AG04450 (cell line): ENCODE measurements at regions of chr2 and their contacts with region 1.

Region 1: GRCh38 chr2:173210270-173211196 is 134.9 kb downstream of the MAP3K20 start:
- DNase-seq: peak; percentile 91
- H3K4me3 ChIP-seq: no peak overlapping the region
- H3K27ac ChIP-seq: peak overlapping the region; percentile 54
- H3K27me3 ChIP-seq: no peaks in the 10 kb centered on the region
- CTCF ChIP-seq: peak; percentile 92

Region 2: GRCh38 chr2:173021939-173022371 is 188.6 kb before region 1 on chr2:
- CTCF ChIA-PET with region 1: interaction called, 324 read pairs
- POLR2A ChIA-PET with region 1: no interaction called
- DNase-seq: no peak
- H3K4me3 ChIP-seq: no peak overlapping the region
- H3K27ac ChIP-seq: no peak overlapping the region
- H3K27me3 ChIP-seq: no peaks in the 10 kb centered on the region
- CTCF ChIP-seq: peak; percentile 61

Region 3: GRCh38 chr2:173037245-173038120 is 173.1 kb before region 1 on chr2:
- CTCF ChIA-PET with region 1: interaction called, 17 read pairs
- POLR2A ChIA-PET with region 1: no interaction called
- DNase-seq: no peak
- H3K4me3 ChIP-seq: no peak overlapping the region
- H3K27ac ChIP-seq: no peak overlapping the region
- H3K27me3 ChIP-seq: no peaks in the 10 kb centered on the region
- CTCF ChIP-seq: no peak

Region 4: GRCh38 chr2:173075781-173076580 is 134.6 kb before region 1 on chr2 and contains the start of gene MAP3K20:
- CTCF ChIA-PET with region 1: interaction called, 14 read pairs
- POLR2A ChIA-PET with region 1: interaction called, 6 read pairs
- DNase-seq: no peak
- H3K4me3 ChIP-seq: peak within 1 kb of the TSS; percentile 75
- H3K27ac ChIP-seq: peak within 1 kb of the TSS; percentile 86
- H3K27me3 ChIP-seq: no peaks in the 10 kb centered on the region
- CTCF ChIP-seq: peak; percentile 48
- polyA plus RNA-seq, gene MAP3K20: 59.8 and 74.6 TPM in 2 replicates

Region 5: GRCh38 chr2:173090276-173090877 is 120.2 kb before region 1 on chr2:
- CTCF ChIA-PET with region 1: interaction called, 20 read pairs
- POLR2A ChIA-PET with region 1: no interaction called
- DNase-seq: no peak
- H3K4me3 ChIP-seq: peak overlapping the region; percentile 40
- H3K27ac ChIP-seq: peak overlapping the region; percentile 54
- H3K27me3 ChIP-seq: no peaks in the 10 kb centered on the region
- CTCF ChIP-seq: no peak

Region 6: GRCh38 chr2:173193925-173194324 is 16.6 kb before region 1 on chr2:
- CTCF ChIA-PET with region 1: interaction called, 24 read pairs
- POLR2A ChIA-PET with region 1: no interaction called
- DNase-seq: no peak
- H3K4me3 ChIP-seq: no peak overlapping the region
- H3K27ac ChIP-seq: no peak overlapping the region
- H3K27me3 ChIP-seq: no peaks in the 10 kb centered on the region
- CTCF ChIP-seq: no peak

Region 7: GRCh38 chr2:173199294-173199693 is 11.2 kb before region 1 on chr2:
- CTCF ChIA-PET with region 1: interaction called, 24 read pairs
- POLR2A ChIA-PET with region 1: no interaction called
- DNase-seq: no peak
- H3K4me3 ChIP-seq: no peak overlapping the region
- H3K27ac ChIP-seq: no peak overlapping the region
- H3K27me3 ChIP-seq: no peaks in the 10 kb centered on the region
- CTCF ChIP-seq: no peak

Region 8: DNA sequence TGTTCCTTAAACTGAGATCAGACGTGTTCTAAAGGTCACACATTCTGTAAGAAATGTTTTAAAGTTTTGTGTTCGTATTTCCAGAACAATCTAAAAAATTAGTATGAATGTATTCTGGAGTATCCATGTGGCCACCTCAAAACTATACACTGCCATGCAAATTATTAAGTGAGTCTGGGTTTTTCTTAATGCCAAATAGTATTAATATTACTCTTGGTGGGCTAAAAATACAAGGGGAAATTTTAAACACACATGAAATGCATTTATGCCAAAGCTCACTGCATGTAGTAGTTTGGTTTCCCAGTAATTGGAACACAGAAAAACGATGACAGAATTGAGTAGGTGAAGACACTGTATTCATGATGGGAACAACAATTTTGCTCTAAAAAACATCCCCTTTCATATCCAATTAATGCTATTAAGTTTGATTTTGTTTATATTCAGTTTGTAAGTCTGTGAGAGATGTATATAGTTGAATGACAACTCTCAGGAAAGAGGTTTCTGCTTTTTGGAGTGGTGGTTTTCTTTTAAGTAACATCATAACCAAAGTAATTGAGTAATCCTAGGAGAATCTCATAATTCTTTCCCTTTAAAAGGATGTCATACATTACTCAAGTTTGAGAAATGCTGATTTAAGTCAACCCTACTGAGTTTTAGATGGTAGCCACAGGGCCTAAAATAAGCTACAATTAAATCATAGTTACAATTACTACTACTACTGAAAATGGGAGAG is 68.4 kb after region 1 on chr2:
- CTCF ChIA-PET with region 1: no interaction called
- POLR2A ChIA-PET with region 1: no interaction called
- DNase-seq: no peak
- H3K4me3 ChIP-seq: no peak overlapping the region
- H3K27ac ChIP-seq: no peak overlapping the region
- H3K27me3 ChIP-seq: no peaks in the 10 kb centered on the region
- CTCF ChIP-seq: no peak

Region 9: DNA sequence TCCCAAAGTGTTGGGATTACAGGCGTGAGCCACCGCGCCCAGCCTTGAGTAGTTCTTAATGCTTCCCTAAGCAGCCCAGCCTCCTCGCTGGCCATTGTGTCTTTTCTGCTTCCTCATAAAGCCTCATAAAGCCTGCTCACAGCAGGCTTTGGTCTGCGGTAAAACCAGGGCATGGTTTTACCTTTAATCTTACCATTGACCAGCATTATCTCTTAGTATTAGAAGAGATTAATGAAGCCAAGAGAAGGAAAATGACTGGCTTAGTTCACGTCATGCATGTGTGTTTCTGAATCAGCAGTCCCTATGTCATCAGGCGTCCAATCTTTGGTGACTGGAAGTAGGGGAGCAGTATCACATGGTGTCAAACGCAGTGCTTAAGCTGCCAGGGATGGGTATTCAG is 129.3 kb after region 1 on chr2:
- CTCF ChIA-PET with region 1: no interaction called
- POLR2A ChIA-PET with region 1: no interaction called
- DNase-seq: no peak
- H3K4me3 ChIP-seq: no peak overlapping the region
- H3K27ac ChIP-seq: no peak overlapping the region
- H3K27me3 ChIP-seq: peaks cover 5% of the 10 kb centered on the region
- CTCF ChIP-seq: no peak